GM10248 (cell line): ENCODE measurements at regions of chr7 and their contacts with region 1.

Region 1: DNA sequence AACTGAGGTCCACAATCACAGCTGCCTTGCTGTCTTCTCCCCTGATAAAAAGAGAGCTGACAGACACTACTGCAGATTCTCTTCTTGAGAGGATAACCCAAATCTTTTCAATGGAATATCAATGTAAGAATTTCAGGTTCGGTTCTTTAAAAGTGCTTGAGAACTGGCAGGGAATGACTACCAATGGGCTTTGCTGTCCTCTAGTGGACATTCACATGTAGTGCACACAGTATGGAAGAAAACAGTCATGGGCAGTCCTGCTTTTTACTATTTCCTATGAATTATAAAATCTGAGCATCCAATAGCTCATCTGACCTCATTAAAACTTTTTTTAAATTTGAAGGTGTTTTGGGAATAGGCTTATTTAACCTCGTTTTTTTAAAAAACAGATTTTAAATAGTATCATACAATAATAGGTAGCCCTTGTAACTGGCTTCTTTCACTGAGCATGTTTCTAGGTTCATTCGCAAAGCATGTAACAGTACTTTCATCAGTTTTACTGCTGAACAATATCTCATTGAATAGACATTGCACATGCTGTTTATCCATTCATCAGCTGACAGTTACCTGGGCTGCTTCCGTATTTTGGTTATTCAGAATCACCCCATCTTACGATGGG is 18.3 kb downstream of the FZD9 start:
- DNase-seq: peak; percentile 66
- CTCF ChIP-seq: peak; percentile 89

Region 2: GRCh38 chr7:73329861-73330581 is 121.9 kb before region 1 on chr7:
- CTCF ChIA-PET with region 1: interaction called, 45 read pairs
- POLR2A ChIA-PET with region 1: no interaction called
- DNase-seq: no peak
- CTCF ChIP-seq: no peak

Region 3: DNA sequence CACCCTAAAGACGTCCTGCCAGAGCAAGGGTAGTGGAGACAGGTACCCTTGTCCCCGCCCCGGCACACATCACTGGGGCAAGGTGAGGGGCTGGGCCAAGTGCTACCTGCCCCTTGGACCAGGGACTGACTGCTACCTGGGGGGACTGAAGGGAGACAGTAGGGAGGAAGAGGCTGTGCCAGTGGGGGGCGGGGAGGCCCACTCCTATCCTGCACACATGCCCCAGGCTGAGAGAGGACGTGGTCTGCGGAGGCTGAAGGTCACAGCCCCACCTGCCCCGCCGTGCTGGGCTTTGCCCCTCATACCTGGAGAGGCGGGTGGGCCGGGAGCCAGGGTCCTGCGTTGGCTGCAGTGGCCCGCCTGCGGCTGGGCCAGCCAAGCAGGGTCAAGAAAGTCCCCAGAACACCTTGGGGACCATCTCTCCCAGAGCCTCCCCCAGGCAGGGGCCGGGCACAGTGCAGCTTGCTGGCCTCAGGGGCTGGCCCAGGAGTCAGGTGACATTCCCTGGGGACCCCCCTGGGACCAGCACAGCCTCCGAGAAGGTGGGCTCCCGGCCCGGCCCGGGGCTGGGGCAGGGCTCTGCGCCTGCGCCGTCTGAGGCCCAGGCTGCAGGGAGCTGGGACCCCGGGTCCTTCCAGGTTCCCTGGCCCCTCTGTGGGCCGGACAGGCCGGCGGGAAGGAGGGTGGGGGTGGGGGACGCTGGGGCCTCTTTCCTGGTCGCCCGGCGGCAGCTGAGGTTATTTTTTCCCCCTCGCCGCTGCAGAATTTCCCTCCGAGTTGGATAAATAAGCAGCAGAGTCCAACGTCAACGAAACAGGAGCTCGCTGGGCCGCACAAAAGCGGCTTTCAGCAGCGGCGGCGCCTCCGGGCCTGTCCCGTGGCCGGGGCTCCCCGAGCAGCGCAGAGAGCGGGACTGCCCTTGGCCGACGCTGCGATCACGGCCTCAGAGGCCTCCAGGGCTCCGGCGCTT is 28.1 kb before region 1 on chr7:
- CTCF ChIA-PET with region 1: interaction called, 13 read pairs
- POLR2A ChIA-PET with region 1: no interaction called
- DNase-seq: peak; percentile 64
- CTCF ChIP-seq: no peak

Region 4: GRCh38 chr7:73436031-73436828 is 15.7 kb before region 1 on chr7:
- CTCF ChIA-PET with region 1: interaction called, 32 read pairs
- POLR2A ChIA-PET with region 1: no interaction called
- DNase-seq: no peak
- CTCF ChIP-seq: no peak

Region 5: GRCh38 chr7:73463966-73464365 is 12.1 kb after region 1 on chr7:
- CTCF ChIA-PET with region 1: interaction called, 29 read pairs
- POLR2A ChIA-PET with region 1: no interaction called
- DNase-seq: no peak
- CTCF ChIP-seq: no peak

Region 6: GRCh38 chr7:73477376-73477775 is 25.5 kb after region 1 on chr7:
- CTCF ChIA-PET with region 1: interaction called, 16 read pairs
- POLR2A ChIA-PET with region 1: no interaction called
- DNase-seq: no peak
- CTCF ChIP-seq: no peak

Region 7: GRCh38 chr7:73522105-73522872 is 70.4 kb after region 1 on chr7 and contains the start of gene BAZ1B:
- CTCF ChIA-PET with region 1: interaction called, 15 read pairs
- POLR2A ChIA-PET with region 1: no interaction called
- DNase-seq: peak; percentile 98
- CTCF ChIP-seq: no peak